ENCODE measurements at regions of chr3 and their contacts with region 1.

Region 1: GRCh38 chr3:168615493-168616020 is 519.8 kb upstream of the GOLIM4 start:
- DNase-seq: no peak

Region 2: GRCh38 chr3:168476360-168476980 is 139.1 kb before region 1 on chr3:
- intact Hi-C with region 1: no loop called
- DNase-seq: no peak

Region 3: GRCh38 chr3:168511428-168512014 is 104.0 kb before region 1 on chr3:
- intact Hi-C with region 1: loop called (anchors 5 kb)
- DNase-seq: no peak

Region 4: GRCh38 chr3:168671082-168671481 is 55.5 kb after region 1 on chr3:
- intact Hi-C with region 1: no loop called
- DNase-seq: no peak

Region 5: DNA sequence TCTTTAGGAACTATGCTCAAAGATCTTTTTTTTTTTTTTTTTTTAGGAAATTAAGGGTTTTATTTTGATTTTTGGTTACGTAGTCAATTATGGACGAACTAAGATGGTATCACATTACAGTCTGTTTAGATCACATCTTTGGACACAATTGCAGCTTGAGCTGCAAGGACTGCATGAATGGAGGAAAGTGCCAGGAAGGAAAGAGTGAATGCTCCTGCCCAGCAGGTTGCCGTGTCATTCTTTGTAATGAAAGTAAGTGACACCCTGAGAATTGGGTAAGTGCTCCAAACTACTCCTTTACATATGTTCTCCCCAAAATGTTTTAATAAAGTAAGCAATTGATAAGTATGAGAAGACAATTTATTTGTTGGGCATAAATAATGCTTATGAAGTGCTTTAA is 196.7 kb after region 1 on chr3:
- intact Hi-C with region 1: no loop called
- DNase-seq: no peak

Region 6: GRCh38 chr3:168977716-168978374 is 362.3 kb after region 1 on chr3:
- intact Hi-C with region 1: no loop called
- DNase-seq: no peak

Measured in cardiac septum (tissue), 1 donor.